ENCODE measurements at regions of chr3 and their contacts with region 1.

Region 1: GRCh38 chr3:136250226-136250902 is at the start of gene PCCB:
- DNase-seq: peak; percentile 91 to 95
- ATAC-seq: peak; percentile 91 to 97
- H3K4me3 ChIP-seq: peak within 1 kb of the TSS; percentile 79 to 95 (median 79)
- H3K27ac ChIP-seq: peak within 1 kb of the TSS; percentile 92 to 98 (median 93)
- H3K4me1 ChIP-seq: peaks cover 16 to 20% of the 10 kb centered on the region in 2 donors
- H3K27me3 ChIP-seq: no peaks in the 10 kb centered on the region
- CTCF ChIP-seq: peak; percentile 83 to 97 (median 88)
- POLR2A ChIP-seq: peak; percentile 51 to 58
- total RNA-seq, gene PCCB: 29.8 to 41.4 (median 37.9) TPM

Region 2: GRCh38 chr3:136093771-136094170 is 156.6 kb before region 1 on chr3:
- in situ Hi-C with region 1: loop called in 1 of 4 experiments (anchors 10 kb)
- intact Hi-C with region 1: no loop called
- DNase-seq: no peak
- ATAC-seq: no peak
- H3K4me3 ChIP-seq: no peak overlapping the region
- H3K27ac ChIP-seq: no peak overlapping the region
- H3K4me1 ChIP-seq: no peaks in the 10 kb centered on the region
- H3K27me3 ChIP-seq: no peaks in the 10 kb centered on the region
- CTCF ChIP-seq: no peak
- POLR2A ChIP-seq: no peak

Region 3: DNA sequence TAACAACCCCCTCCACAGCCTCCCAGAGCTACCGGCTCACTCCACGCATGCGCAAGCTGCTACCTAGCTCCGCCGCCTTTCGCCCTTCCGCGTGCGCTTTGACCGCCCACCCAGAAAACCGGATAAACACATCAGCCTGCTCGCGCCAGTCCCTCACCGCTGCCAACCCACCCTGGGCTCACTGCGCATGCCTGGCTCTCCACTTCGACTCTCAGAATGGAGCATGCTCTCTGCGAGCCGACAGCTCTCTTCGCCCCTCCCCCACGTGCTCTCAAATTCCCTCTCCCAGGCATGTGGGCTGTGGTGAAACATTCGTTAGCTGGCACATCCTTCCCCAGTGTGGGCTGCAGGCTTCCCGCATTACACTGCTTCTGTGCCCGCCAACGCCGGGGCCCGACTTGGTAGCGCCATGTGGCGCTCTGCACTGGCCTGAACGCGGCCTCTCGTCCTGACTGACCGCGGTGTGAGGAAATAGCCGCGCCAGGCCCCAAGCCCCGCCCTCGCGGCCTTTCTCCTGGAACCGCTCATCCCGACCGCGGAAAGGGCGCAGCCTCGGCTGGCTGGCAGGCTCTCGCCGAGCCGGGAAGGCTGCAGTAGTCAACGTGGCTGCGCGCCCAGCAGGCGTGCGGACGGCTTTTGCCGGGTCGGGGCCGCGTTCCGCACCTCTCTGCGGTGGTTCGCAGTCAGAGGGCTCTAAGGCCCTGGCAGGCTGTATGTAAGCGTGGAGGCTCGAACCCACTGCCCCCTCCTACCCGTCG is 53.8 kb before region 1 on chr3:
- in situ Hi-C with region 1: loop called in 1 of 4 experiments (anchors 10 kb)
- intact Hi-C with region 1: loop called (anchors 1 kb)
- DNase-seq: peak; percentile 97 to 99
- ATAC-seq: peak; percentile 78 to 84
- H3K4me3 ChIP-seq: peak overlapping the region; percentile 84 to 95 (median 92)
- H3K27ac ChIP-seq: peak overlapping the region; percentile 91 to 100 (median 100)
- H3K4me1 ChIP-seq: peaks cover 32 to 38% of the 10 kb centered on the region in 2 donors
- H3K27me3 ChIP-seq: no peaks in the 10 kb centered on the region
- CTCF ChIP-seq: no peak
- POLR2A ChIP-seq: peak; percentile 69 to 80

Region 4: DNA sequence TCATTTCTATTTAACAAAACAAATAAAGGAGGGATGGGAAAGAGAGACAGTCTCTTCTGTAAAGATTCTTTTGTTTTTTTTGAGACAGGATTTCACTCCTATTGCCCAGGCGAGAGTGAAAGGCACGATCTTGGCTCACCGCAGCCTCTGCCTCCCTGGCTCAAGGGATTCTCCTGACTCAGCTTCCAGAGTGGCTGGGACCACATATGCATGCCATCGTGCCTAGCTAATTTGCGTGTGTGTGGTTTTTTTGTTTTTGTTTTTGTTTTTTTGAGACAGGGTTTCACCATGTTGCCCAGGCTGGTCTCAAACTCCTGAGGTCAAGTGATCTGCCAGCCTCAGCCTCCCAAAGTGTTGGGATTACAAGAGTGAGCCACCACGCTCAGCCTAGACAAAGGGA is 478.6 kb after region 1 on chr3:
- in situ Hi-C with region 1: loop called in 1 of 4 experiments (anchors 25 kb)
- intact Hi-C with region 1: no loop called
- DNase-seq: no peak
- ATAC-seq: no peak
- H3K4me3 ChIP-seq: peak overlapping the region in 1 of 4 donors; percentile 12
- H3K27ac ChIP-seq: no peak overlapping the region
- H3K4me1 ChIP-seq: peaks cover 34 to 66% of the 10 kb centered on the region in 2 donors
- H3K27me3 ChIP-seq: no peaks in the 10 kb centered on the region
- CTCF ChIP-seq: no peak
- POLR2A ChIP-seq: no peak

Measured in gastrocnemius medialis (tissue), 4 donors.